Posterior cingulate gyrus (tissue), 11 donors: ENCODE measurements at regions of chr6 and their contacts with region 1.

Region 1: DNA sequence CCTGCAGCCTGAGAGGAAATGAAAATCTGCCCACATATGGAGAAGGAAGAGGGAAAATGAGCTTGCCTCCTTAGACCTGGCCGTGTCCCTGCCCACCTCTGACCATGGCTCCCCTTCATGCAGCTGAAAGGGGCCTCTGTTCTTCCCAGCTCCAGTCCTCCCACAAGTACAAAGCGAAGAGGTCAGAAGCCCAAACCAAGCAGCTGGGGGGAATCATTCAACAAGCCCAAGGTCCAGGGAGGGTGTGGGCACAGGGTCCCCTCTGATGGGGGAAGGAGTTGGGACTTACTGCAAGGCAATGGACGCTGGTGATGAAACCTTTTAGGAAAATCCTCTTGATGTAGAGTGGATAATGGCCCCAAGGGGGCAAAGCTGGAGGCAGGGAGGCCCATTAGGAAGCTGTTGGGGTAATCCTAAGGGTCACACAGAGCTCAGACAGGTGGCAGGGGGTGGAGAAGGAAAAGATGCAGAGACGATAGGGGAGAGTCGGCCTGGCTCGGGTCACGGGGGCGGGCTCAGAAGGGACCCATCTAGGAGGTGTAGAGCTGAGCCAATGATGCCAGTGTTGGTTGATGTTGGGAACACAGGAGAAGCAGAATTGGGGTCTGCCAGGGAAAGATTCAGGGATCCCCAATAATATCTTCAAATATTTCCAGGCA is 16.1 kb upstream of the GRM4 start:
- DNase-seq: peak in 4 of 10 donors; percentile 3 to 52 (median 36)

Region 2: GRCh38 chr6:34414999-34415858 is 253.2 kb after region 1 on chr6:
- intact Hi-C with region 1: loop called (anchors 10 kb)
- DNase-seq: peak in 5 of 10 donors; percentile 29 to 64 (median 51)